ENCODE measurements at regions of chr5 and their contacts with region 1.

Region 1: GRCh38 chr5:149561848-149562247 is 10.6 kb upstream of the CSNK1A1 start:
- DNase-seq: peak; percentile 97
- H3K4me3 Mint-ChIP-seq: peak overlapping the region; percentile 50
- H3K27ac Mint-ChIP-seq: peak overlapping the region; percentile 82
- H3K4me1 Mint-ChIP-seq: peaks cover 38% of the 10 kb centered on the region
- H3K27me3 Mint-ChIP-seq: no peaks in the 10 kb centered on the region
- CTCF ChIP-seq: no peak

Region 2: GRCh38 chr5:149133795-149134780 is 427.8 kb before region 1 on chr5:
- CTCF ChIA-PET with region 1: interaction called, 4 read pairs
- POLR2A ChIA-PET with region 1: interaction called, 4 read pairs
- intact Hi-C with region 1: loop called (anchors 5 kb)
- DNase-seq: peak; percentile 99
- H3K4me3 Mint-ChIP-seq: peak overlapping the region; percentile 33
- H3K27ac Mint-ChIP-seq: peak overlapping the region; percentile 88
- H3K4me1 Mint-ChIP-seq: peaks cover 70% of the 10 kb centered on the region
- H3K27me3 Mint-ChIP-seq: no peaks in the 10 kb centered on the region
- CTCF ChIP-seq: no peak

Region 3: DNA sequence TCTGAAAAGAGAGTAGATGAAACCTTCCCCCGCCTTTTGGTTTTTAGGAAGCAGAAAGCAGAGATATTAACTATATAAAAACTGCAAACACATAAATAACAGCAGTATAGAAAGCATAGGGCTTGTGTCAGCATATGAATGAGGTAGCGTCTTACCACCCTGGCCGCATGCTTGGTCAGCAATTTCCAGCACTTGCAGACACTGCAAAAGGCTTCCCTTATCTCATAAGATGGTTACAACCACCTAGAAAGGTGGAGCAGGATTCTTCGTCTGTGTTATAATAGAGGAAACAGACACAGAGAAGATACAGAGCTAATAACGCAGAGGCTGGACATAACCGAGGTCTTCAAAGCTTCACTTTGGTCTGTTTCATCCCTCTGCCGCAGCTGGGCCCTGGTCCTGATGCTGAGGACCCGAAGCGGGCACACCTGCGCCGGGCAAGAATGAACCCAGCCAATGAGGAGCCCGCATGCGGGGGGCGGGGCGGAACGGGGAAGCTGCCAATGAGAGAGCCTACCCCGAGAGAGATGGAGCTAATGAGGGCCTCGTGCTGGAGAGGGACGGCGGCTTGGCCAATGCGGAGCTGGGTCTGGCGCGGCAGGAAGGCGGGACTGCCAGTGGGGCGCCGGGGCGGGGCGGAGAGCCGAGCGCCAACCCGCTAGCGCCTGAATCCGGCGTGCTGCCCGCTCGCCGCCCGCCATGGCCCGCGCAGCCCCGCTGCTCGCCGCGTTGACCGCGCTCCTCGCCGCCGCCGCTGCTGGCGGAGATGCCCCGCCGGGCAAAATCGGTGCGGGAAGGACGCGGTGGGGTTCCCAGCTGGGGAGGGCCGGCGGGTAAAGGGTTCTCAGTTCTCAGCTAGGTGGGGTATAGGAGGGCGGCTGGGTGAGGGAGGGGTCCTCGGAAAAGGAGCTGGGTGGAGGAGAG is 204.2 kb before region 1 on chr5 and contains the start of gene PCYOX1L:
- CTCF ChIA-PET with region 1: interaction called, 11 read pairs
- POLR2A ChIA-PET with region 1: interaction called, 12 read pairs
- intact Hi-C with region 1: no loop called
- DNase-seq: peak; percentile 99
- H3K4me3 Mint-ChIP-seq: peak within 1 kb of the TSS; percentile 82
- H3K27ac Mint-ChIP-seq: no peak within 1 kb of the TSS
- H3K4me1 Mint-ChIP-seq: peaks cover 12% of the 10 kb centered on the region
- H3K27me3 Mint-ChIP-seq: no peaks in the 10 kb centered on the region
- CTCF ChIP-seq: no peak
- total RNA-seq, gene PCYOX1L: 7.7 and 8.0 TPM in 2 replicates

Region 4: GRCh38 chr5:149434162-149435014 is 127.5 kb before region 1 on chr5:
- CTCF ChIA-PET with region 1: interaction called, 59 read pairs
- POLR2A ChIA-PET with region 1: interaction called, 162 read pairs
- intact Hi-C with region 1: no loop called
- DNase-seq: peak; percentile 75
- H3K4me3 Mint-ChIP-seq: no peak overlapping the region
- H3K27ac Mint-ChIP-seq: no peak overlapping the region
- H3K4me1 Mint-ChIP-seq: peaks cover 13% of the 10 kb centered on the region
- H3K27me3 Mint-ChIP-seq: no peaks in the 10 kb centered on the region
- CTCF ChIP-seq: peak; percentile 98

Region 5: DNA sequence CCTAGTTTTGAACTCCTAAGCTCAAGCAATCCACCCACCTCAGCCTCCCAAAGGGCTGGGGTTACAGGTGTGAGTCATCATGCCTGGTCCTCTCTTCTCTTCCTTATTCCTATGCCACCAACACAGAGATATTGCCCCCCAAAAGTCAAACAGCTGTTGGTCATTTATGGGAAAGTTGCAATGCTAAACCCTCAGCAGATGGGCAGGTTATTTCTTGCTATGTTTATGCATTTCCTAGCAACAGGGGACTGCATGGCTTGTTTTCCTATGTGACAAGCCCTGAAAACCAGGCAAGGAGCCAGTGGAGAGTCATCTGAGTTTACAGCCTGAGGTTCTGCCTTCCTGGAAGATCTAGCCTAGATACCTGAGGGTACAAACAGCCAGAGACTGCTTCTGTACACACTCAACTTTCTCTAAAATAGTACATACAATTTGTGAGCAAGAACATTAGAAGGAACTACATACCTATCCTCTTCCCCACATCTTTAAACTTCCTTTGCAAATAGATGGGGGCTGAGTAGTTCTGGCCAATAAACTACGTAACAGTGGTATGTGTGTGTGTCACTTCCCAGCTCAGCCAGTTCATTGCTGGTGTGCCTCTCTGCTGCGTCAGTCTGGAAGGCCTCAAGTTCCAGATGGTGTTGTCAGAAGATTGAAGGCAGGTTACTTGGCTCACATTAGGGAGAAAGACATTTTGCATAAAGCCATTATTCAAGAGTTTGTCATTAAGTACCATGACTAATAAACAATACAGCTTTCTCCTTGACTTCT is 76.0 kb before region 1 on chr5:
- CTCF ChIA-PET with region 1: interaction called, 10 read pairs
- POLR2A ChIA-PET with region 1: interaction called, 108 read pairs
- intact Hi-C with region 1: loop called (anchors 5 kb)
- DNase-seq: peak; percentile 97
- H3K4me3 Mint-ChIP-seq: no peak overlapping the region
- H3K27ac Mint-ChIP-seq: peak overlapping the region; percentile 98
- H3K4me1 Mint-ChIP-seq: peaks cover 57% of the 10 kb centered on the region
- H3K27me3 Mint-ChIP-seq: no peaks in the 10 kb centered on the region
- CTCF ChIP-seq: no peak

Region 6: DNA sequence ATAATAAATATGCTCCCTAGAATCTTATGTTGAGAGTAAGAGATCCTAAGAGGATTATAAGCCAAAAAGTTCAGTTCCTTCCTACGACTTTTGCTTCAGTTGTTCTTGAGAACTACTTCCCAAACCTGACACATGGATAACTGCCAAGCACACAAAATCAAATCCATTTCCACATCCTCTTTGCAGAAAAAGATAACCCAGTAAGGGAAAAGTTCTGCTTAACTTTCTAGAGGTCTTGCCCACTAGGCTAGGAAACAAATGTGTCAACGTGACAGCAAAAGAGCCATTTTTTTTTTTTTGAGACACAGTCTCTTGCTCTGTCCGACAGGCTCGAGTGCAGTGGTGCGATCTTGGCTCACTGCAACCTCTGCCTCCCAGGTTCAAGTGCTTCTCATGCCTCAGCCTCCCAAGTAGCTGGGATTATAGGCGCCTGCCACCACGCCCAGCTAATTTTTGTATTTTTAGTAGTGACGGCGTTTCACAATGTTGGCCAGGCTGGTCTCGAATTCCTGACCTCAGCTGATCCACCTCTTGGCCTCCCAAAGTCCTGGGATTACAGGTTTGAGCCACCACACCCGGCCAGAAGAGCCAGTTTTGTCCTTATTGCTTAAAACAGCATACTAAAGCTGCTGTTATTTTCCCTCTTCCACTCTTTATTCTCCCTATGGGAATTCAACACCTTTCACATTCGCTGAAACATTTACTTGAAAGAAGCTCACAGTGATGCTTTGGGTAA is 34.8 kb before region 1 on chr5:
- CTCF ChIA-PET with region 1: interaction called, 7 read pairs
- POLR2A ChIA-PET with region 1: interaction called, 27 read pairs
- intact Hi-C with region 1: no loop called
- DNase-seq: no peak
- H3K4me3 Mint-ChIP-seq: no peak overlapping the region
- H3K27ac Mint-ChIP-seq: peak overlapping the region; percentile 46
- H3K4me1 Mint-ChIP-seq: peaks cover 62% of the 10 kb centered on the region
- H3K27me3 Mint-ChIP-seq: no peaks in the 10 kb centered on the region
- CTCF ChIP-seq: no peak

Region 7: GRCh38 chr5:149605998-149606724 is 44.3 kb after region 1 on chr5:
- CTCF ChIA-PET with region 1: interaction called, 17 read pairs
- POLR2A ChIA-PET with region 1: interaction called, 30 read pairs
- intact Hi-C with region 1: no loop called
- DNase-seq: peak; percentile 99
- H3K4me3 Mint-ChIP-seq: no peak overlapping the region
- H3K27ac Mint-ChIP-seq: peak overlapping the region; percentile 91
- H3K4me1 Mint-ChIP-seq: peaks cover 48% of the 10 kb centered on the region
- H3K27me3 Mint-ChIP-seq: no peaks in the 10 kb centered on the region
- CTCF ChIP-seq: no peak

Region 8: GRCh38 chr5:149667084-149667828 is 105.4 kb after region 1 on chr5:
- CTCF ChIA-PET with region 1: no interaction called
- POLR2A ChIA-PET with region 1: no interaction called
- intact Hi-C with region 1: no loop called
- DNase-seq: peak; percentile 66
- H3K4me3 Mint-ChIP-seq: no peak overlapping the region
- H3K27ac Mint-ChIP-seq: no peak overlapping the region
- H3K4me1 Mint-ChIP-seq: peaks cover 8% of the 10 kb centered on the region
- H3K27me3 Mint-ChIP-seq: no peaks in the 10 kb centered on the region
- CTCF ChIP-seq: peak; percentile 96

Measured in MCF 10A (cell line).